HepG2 (cell line): ENCODE measurements at regions of chr19 and their contacts with region 1.

Region 1: DNA sequence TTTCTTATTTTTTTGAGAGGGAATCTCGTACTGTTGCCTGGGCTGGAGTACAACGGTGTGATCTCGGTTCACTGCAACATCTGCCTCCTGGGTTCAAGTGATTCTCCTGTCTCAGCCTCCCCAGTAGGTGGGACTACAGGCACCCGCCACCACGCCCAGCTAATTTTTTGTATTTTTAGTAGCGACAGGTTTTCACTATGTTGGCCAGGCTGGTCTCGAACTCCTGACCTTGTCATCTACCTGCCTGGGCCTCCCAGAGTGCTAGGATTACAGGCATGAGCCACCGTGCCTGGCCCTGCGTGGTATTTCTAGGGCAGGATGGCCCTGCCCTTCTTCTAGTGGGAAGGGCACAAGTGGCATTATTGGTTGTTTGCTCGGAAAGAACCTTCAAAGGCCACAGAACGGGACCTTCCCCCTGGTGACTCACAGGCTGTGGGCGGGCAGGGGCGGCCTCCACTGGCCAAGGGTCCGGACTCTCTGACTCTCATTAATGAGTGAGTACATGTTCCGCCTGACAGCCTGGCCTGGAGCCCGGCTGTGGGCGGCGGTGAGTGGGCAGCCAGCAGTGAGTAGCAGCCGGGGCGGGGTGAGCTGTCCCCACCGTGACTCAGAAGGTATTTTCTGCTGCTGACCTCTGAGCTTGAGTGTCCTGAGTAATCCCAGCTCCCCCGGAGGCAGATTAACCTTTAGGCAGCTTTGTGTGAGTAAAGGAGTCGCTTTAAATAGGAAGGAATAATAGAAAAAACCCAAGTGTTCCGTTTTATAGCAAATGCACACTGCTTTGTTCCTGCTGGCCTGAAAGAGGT is 5.1 kb downstream of the DOT1L start:
- DNase-seq: peak; percentile 99
- ATAC-seq: peak; percentile 83
- H3K4me3 ChIP-seq: peak overlapping the region; percentile 29 to 42 (median 36); a peak in 5 of 6 replicates
- H3K27ac ChIP-seq: peak overlapping the region; percentile 96
- H3K4me1 ChIP-seq: peaks cover 79% of the 10 kb centered on the region
- H3K27me3 ChIP-seq: no peaks in the 10 kb centered on the region; a peak in 1 of 5 replicates
- CTCF ChIP-seq: peak; percentile 49
- EP300 ChIP-seq: peak; percentile 40 to 85; a peak in 2 of 4 replicates
- POLR2A ChIP-seq: peak; percentile 55 to 69
- RAD21 ChIP-seq: 0 out of 2 replicates have a peak, but pooled peaks have one; percentile 36

Region 2: DNA sequence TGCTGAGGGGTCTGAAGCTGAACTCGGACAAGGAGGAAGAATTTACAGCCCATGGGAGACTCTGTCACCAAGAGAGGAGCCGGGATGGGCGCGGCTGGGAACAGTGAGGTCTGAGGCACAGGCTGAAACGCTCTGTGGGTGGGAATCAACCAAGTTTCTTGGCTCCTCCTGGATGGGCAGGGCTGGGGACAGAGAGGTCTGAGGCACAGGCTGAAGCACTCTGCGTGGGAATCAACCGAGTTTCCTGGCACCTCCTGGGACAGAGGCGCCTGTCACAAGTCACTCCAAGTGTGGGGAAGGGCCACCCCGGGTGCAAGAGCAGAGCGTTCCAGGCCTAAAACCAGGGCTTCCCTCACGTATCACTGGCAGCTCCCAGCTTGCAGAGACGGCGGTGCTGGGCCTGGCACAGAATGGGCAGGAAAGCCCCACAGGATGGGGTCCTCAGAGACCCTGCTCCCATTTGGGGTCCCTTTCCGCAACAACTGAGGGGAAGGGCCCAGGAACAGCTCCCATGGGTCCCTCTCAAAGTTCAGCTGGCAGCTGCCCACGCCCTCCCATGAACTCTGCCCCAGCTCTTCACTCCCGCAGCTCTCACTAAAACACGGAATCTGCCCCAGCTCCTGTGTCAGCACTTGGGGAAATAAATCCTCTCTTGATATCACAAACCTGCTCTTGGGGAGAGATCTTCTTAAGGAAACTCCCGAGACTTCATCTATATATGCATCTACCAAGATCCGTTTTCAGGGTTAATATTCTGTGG is 35.9 kb before region 1 on chr19:
- CTCF ChIA-PET with region 1: no interaction called
- POLR2A ChIA-PET with region 1: no interaction called
- in situ Hi-C with region 1: no loop called
- intact Hi-C with region 1: no loop called
- DNase-seq: no peak
- ATAC-seq: no peak
- H3K4me3 ChIP-seq: no peak overlapping the region
- H3K27ac ChIP-seq: no peak overlapping the region
- H3K4me1 ChIP-seq: no peaks in the 10 kb centered on the region
- H3K27me3 ChIP-seq: no peaks in the 10 kb centered on the region
- CTCF ChIP-seq: no peak
- EP300 ChIP-seq: no peak
- POLR2A ChIP-seq: no peak
- RAD21 ChIP-seq: no peak

Region 3: GRCh38 chr19:2151339-2152229 is 17.2 kb before region 1 on chr19 and contains the start of gene AP3D1:
- CTCF ChIA-PET with region 1: interaction called, 5 read pairs
- POLR2A ChIA-PET with region 1: interaction called, 10 read pairs
- in situ Hi-C with region 1: no loop called
- intact Hi-C with region 1: no loop called
- DNase-seq: peak; percentile 98
- ATAC-seq: peak; percentile 86
- H3K4me3 ChIP-seq: peak within 1 kb of the TSS; percentile 85 to 100 (median 97)
- H3K27ac ChIP-seq: peak within 1 kb of the TSS; percentile 76
- H3K4me1 ChIP-seq: peaks cover 60% of the 10 kb centered on the region
- H3K27me3 ChIP-seq: no peaks in the 10 kb centered on the region; a peak in 1 of 5 replicates
- CTCF ChIP-seq: peak; percentile 12; the same call in 1 of the 2 replicates
- EP300 ChIP-seq: no peak; a peak in 1 of 4 replicates
- POLR2A ChIP-seq: peak; percentile 25 to 52; a peak in 1 of 4 replicates
- RAD21 ChIP-seq: no peak; the same call in none of the 2 replicates
- total RNA-seq, gene AP3D1: 73.5 and 82.6 TPM in 2 replicates

Region 4: GRCh38 chr19:2213799-2214198 is 45.0 kb after region 1 on chr19:
- CTCF ChIA-PET with region 1: no interaction called
- POLR2A ChIA-PET with region 1: interaction called, 13 read pairs
- in situ Hi-C with region 1: loop called (anchors 5 kb)
- intact Hi-C with region 1: no loop called
- DNase-seq: no peak
- ATAC-seq: no peak
- H3K4me3 ChIP-seq: no peak overlapping the region
- H3K27ac ChIP-seq: peak overlapping the region; percentile 77
- H3K4me1 ChIP-seq: peaks cover 27% of the 10 kb centered on the region
- H3K27me3 ChIP-seq: no peaks in the 10 kb centered on the region
- CTCF ChIP-seq: no peak
- EP300 ChIP-seq: no peak
- POLR2A ChIP-seq: no peak
- RAD21 ChIP-seq: no peak